HepG2 (cell line): ENCODE measurements at regions of chr20 and their contacts with region 1.

Region 1: DNA sequence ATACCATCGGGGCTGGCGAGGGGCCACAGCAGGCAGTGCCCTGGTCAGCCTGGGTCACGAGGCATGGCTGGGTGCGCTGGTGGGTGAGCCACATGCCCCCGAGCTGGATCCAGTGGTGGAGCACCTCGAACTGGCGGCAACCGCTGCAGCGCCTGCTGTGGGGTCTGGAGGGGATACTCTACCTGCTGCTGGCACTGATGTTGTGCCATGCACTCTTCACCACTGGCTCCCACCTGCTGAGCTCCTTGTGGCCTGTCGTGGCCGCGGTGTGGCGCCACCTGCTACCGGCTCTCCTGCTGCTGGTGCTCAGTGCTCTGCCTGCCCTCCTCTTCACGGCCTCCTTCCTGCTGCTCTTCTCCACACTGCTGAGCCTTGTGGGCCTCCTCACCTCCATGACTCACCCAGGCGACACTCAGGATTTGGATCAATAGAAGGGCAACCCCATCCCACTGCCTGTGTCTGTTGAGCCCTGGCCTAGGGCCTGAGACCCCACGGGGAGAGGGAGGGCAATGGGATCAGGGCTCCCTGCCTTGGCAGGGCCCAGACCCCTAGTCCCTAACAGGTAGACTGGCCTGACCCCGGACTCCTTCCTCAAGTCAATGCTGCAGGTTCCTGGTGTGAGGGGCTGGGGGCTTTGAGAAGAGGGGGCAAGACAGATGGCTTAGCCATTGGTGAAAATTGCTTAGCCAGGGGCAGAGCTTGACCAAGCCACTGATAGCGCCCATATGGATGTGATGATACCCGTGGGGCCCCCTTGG is 598 bp downstream of the TMEM239 start:
- DNase-seq: no peak
- ATAC-seq: peak; percentile 80
- H3K4me3 ChIP-seq: no peak overlapping the region
- H3K27ac ChIP-seq: no peak overlapping the region
- H3K4me1 ChIP-seq: peaks cover 13% of the 10 kb centered on the region; the same call in 1 of the 2 replicates
- H3K27me3 ChIP-seq: peaks cover 4 to 83% of the 10 kb centered on the region in 2 experiments
- CTCF ChIP-seq: peak; percentile 73
- EP300 ChIP-seq: no peak
- POLR2A ChIP-seq: no peak
- RAD21 ChIP-seq: peak; percentile 49; the same call in 1 of the 2 replicates

Region 2: GRCh38 chr20:2849529-2849928 is 32.8 kb after region 1 on chr20:
- CTCF ChIA-PET with region 1: interaction called, 11 read pairs
- POLR2A ChIA-PET with region 1: no interaction called
- in situ Hi-C with region 1: no loop called
- intact Hi-C with region 1: loop called (anchors 1 kb)
- DNase-seq: no peak
- ATAC-seq: no peak
- H3K4me3 ChIP-seq: no peak overlapping the region
- H3K27ac ChIP-seq: no peak overlapping the region
- H3K4me1 ChIP-seq: no peaks in the 10 kb centered on the region
- H3K27me3 ChIP-seq: no peaks in the 10 kb centered on the region
- CTCF ChIP-seq: no peak
- EP300 ChIP-seq: no peak
- POLR2A ChIP-seq: no peak
- RAD21 ChIP-seq: no peak